Aorta (tissue), 5 donors: ENCODE measurements at regions of chr17 and their contacts with region 1.

Region 1: GRCh38 chr17:82518826-82519810 is at the start of gene FOXK2:
- DNase-seq: peak; percentile 95
- ATAC-seq: peak; percentile 99
- H3K4me3 ChIP-seq: peak within 1 kb of the TSS; percentile 93 to 95
- H3K27ac ChIP-seq: peak within 1 kb of the TSS; percentile 96
- H3K4me1 ChIP-seq: peaks cover 0 to 2% of the 10 kb centered on the region in 2 donors
- H3K27me3 ChIP-seq: no peaks in the 10 kb centered on the region
- total RNA-seq, gene FOXK2: 52.0 to 58.8 TPM

Region 2: DNA sequence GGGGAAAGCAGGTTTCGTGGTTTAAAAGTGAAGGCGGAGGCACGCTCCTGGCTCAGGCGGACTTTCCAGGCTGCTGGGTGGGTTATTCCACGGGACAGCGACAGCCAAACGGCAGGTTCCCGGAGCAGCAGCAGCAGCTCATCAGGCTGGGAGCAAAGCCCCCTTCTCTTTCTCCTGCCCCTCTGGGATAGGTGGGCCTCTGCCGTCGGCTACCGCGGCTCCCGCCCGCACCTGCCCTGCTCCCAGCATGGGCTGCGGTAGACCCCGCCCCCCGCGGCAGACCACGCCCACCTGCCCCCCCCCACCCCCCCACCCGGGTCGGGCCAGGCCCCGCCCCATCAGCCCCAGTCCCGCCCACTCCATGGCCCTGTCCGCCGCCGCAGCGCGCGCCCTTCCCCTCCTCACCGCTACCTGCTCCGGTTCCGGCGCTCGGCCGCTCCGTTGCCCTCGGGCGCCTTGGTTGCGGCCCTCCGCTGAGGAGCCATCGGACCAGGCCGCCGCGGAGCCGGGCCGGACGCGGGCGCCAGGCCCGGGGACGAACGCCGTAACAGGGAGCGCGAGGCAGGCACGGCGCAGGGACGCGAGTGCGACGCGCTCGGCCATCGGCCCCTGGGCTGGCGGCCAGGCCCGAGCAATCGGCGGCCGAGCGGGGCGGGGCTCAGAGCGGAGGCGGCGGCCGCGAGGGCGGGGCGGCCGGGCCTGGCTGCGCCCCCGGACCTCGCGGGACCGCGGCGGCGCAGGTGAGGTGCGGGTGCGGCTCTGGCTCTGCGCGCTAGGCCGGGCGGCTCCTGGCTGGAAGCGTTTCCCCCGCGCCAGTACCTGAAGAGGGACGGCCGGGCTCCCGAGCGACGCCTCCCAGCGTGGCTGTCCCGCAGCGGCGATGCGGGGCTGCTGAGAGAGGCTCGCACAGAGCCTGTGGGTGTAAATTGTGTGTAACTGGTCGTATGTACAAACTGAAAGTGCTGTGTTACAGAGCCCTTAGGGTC is 100.8 kb before region 1 on chr17 and contains the starts of genes HEXD and OGFOD3:
- intact Hi-C with region 1: no loop called
- DNase-seq: peak; percentile 86 to 93
- ATAC-seq: peak; percentile 93
- H3K4me3 ChIP-seq: peak within 1 kb of the TSS; percentile 59 to 85
- H3K27ac ChIP-seq: peak within 1 kb of the TSS in 1 of 2 donors; percentile 74
- H3K4me1 ChIP-seq: no peaks in the 10 kb centered on the region
- H3K27me3 ChIP-seq: no peaks in the 10 kb centered on the region
- total RNA-seq, gene HEXD: 14.8 to 34.7 TPM
- total RNA-seq, gene OGFOD3: 17.5 to 22.2 TPM

Region 3: DNA sequence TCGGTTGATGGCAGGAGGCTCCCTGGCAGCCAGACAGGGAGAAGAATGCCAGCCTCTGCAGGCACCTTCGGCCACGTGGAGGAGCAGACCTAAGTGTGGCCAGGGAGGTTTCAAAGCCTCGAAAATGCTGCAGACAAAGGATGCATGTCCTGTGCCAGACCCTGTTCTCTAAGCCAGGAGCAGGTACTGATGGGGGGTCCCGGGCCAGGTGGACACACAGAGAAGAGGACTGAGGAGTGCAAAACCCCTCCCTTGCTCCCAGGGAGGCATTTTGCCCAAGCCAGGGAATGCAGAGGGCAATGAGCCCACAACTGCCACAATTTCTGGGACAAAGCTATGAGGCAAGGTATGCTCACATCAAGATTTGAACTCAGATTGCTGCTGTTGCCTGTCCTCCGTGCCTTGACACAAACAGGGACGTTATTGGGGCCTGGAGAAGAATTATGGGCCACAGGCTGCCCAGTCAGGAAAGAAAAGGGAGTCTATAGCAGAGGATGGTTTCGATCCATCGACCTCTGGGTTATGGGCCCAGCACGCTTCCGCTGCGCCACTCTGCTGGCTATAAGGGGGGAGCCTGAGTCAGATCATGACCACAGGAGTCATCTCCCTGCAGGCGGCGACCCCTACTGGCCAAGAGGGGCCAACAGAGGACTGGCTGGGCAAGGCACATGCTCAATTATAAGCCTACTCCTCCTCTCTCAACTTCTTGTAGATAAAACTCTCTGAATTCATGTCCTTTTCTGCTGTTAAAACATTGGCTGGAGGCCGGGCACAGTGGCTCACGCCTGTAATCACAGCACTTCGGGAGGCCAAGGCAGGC is 24.7 kb before region 1 on chr17:
- intact Hi-C with region 1: loop called in 1 of 2 experiments (anchors 2 kb)
- DNase-seq: peak; percentile 94 to 95
- ATAC-seq: peak; percentile 90
- H3K4me3 ChIP-seq: no peak overlapping the region
- H3K27ac ChIP-seq: peak overlapping the region in 1 of 2 donors; percentile 12
- H3K4me1 ChIP-seq: no peaks in the 10 kb centered on the region
- H3K27me3 ChIP-seq: no peaks in the 10 kb centered on the region